ENCODE measurements at regions of chr2 and their contacts with region 1.

Region 1: DNA sequence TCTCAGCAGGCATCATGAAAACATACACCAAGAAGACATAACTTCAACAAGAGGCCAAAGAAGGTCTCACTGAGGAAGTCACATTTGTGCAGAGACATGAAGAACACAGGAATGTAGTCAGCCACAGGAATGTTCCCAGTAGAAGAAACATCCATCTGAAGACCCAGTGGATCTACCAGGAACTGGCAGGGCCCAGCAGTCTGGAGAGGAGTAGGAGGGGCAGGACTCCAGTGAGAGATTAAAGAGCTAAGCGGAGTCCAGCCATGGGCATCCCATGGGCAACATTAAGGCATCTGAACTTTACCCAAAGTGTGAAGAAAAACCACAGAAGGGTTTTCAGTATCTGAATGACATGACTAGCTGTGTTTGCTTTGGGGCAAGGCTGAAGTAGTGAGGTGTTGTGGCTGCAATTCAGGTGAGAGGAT is 103.1 kb downstream of the UPP2 start:
- DNase-seq: no peak
- ATAC-seq: peak; percentile 74

Region 2: GRCh38 chr2:157587576-157587975 is 617.2 kb before region 1 on chr2:
- intact Hi-C with region 1: loop called (anchors 5 kb)
- DNase-seq: no peak
- ATAC-seq: no peak